H1 (cell line): ENCODE measurements at regions of chr9 and their contacts with region 1.

Region 1: GRCh38 chr9:97598461-97599288 is 34.5 kb downstream of the TSTD2 start:
- DNase-seq: peak; percentile 29 to 77
- H3K4me3 ChIP-seq: no peak overlapping the region
- H3K27ac ChIP-seq: no peak overlapping the region
- H3K4me1 ChIP-seq: peaks cover 0 to 5% (median 0%) of the 10 kb centered on the region in 4 experiments; a peak in 3 of 7 replicates
- H3K27me3 ChIP-seq: no peaks in the 10 kb centered on the region
- CTCF ChIP-seq: peak; percentile 70 to 92 (median 88)
- EP300 ChIP-seq: no peak
- POLR2A ChIP-seq: no peak
- RAD21 ChIP-seq: peak; percentile 84 to 87

Region 2: GRCh38 chr9:97459099-97459725 is 139.5 kb before region 1 on chr9:
- CTCF ChIA-PET with region 1: interaction called, 17 read pairs
- POLR2A ChIA-PET with region 1: no interaction called
- DNase-seq: no peak
- H3K4me3 ChIP-seq: no peak overlapping the region
- H3K27ac ChIP-seq: no peak overlapping the region
- H3K4me1 ChIP-seq: peaks cover 0 to 4% (median 3%) of the 10 kb centered on the region in 4 experiments; a peak in 4 of 7 replicates
- H3K27me3 ChIP-seq: peaks cover 0 to 1% (median 0%) of the 10 kb centered on the region in 4 experiments; a peak in 1 of 7 replicates
- CTCF ChIP-seq: no peak
- EP300 ChIP-seq: no peak
- POLR2A ChIP-seq: no peak
- RAD21 ChIP-seq: no peak

Region 3: GRCh38 chr9:97487107-97487506 is 111.6 kb before region 1 on chr9:
- CTCF ChIA-PET with region 1: interaction called, 29 read pairs
- POLR2A ChIA-PET with region 1: no interaction called
- DNase-seq: no peak
- H3K4me3 ChIP-seq: no peak overlapping the region
- H3K27ac ChIP-seq: no peak overlapping the region
- H3K4me1 ChIP-seq: no peaks in the 10 kb centered on the region
- H3K27me3 ChIP-seq: peaks cover 0 to 3% (median 0%) of the 10 kb centered on the region in 4 experiments; a peak in 2 of 7 replicates
- CTCF ChIP-seq: peak in 1 of 3 experiments; percentile 40; a peak in 2 of 4 replicates
- EP300 ChIP-seq: no peak
- POLR2A ChIP-seq: no peak
- RAD21 ChIP-seq: no peak

Region 4: DNA sequence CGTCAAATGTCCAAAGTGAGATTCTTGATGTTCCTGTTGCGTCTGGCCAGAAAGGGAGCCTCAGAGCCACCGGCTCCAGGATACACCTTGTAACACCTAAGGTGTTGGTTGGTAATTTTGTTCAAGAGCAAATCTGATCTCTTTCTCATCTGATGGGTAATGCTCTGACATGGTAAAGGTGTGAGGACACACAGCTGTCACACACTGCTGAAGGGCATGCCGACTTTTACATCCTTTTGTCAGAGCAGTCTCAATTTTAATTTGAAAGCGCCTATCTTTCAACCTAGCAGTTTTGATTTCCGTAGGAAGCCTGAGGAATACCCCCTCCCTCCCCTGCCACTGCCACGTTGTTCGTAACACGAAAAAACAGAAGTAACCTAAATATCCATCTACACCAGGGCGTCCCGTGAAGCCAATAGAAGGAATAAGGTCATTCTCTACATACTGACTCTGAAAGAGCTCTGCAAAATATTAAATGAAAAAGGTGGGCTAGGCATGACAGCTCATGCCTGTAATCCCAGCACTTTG is 22.9 kb before region 1 on chr9:
- CTCF ChIA-PET with region 1: interaction called, 14 read pairs
- POLR2A ChIA-PET with region 1: interaction called, 3 read pairs
- DNase-seq: peak in 1 of 2 experiments; percentile 11
- H3K4me3 ChIP-seq: no peak overlapping the region
- H3K27ac ChIP-seq: no peak overlapping the region
- H3K4me1 ChIP-seq: no peaks in the 10 kb centered on the region
- H3K27me3 ChIP-seq: no peaks in the 10 kb centered on the region
- CTCF ChIP-seq: no peak
- EP300 ChIP-seq: no peak
- POLR2A ChIP-seq: no peak
- RAD21 ChIP-seq: no peak

Region 5: GRCh38 chr9:97623946-97624345 is 25.3 kb after region 1 on chr9:
- CTCF ChIA-PET with region 1: interaction called, 10 read pairs
- POLR2A ChIA-PET with region 1: no interaction called
- DNase-seq: no peak
- H3K4me3 ChIP-seq: no peak overlapping the region
- H3K27ac ChIP-seq: no peak overlapping the region
- H3K4me1 ChIP-seq: peaks cover 0 to 6% (median under 1%) of the 10 kb centered on the region in 4 experiments; a peak in 1 of 7 replicates
- H3K27me3 ChIP-seq: no peaks in the 10 kb centered on the region
- CTCF ChIP-seq: no peak
- EP300 ChIP-seq: no peak
- POLR2A ChIP-seq: no peak
- RAD21 ChIP-seq: no peak

Region 6: DNA sequence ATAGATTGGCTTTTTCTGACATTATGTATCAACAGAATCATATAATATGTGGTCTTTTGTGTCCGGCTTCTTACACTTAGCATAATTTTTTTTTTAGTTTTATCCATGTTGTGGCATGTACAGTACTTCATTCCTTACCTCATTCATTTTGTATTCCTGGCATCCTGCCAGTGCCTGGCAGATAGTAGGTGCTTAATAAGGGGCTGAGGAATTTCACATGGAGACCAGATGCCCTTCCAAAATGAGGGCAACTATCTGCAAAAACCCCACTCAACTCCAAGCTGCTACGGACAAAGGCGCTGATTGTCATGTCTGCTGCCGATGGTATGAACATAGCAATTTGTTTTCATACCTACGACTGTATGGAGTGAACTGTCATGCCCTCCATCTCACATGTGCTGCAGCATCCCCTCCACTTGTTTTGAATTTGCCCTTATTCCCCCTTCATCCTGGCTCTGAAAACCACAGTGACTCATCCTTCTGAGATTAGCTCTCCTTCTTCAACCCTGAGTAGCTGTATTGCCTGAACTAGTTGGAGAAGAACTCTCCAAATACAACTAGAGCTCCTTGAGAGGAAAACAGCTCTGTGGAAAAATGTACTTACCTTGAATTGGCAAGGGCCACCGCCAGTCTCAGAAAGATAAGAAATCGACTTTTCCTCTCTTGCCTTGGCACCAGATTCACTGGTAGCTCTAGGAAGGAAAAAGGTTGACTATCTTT is 213.0 kb after region 1 on chr9:
- CTCF ChIA-PET with region 1: no interaction called
- POLR2A ChIA-PET with region 1: no interaction called
- DNase-seq: no peak
- H3K4me3 ChIP-seq: no peak overlapping the region
- H3K27ac ChIP-seq: no peak overlapping the region
- H3K4me1 ChIP-seq: peaks cover 3 to 15% (median 12%) of the 10 kb centered on the region in 4 experiments; a peak in 6 of 7 replicates
- H3K27me3 ChIP-seq: peaks cover 0 to 3% (median 0%) of the 10 kb centered on the region in 4 experiments; a peak in 1 of 7 replicates
- CTCF ChIP-seq: no peak
- EP300 ChIP-seq: no peak
- POLR2A ChIP-seq: no peak
- RAD21 ChIP-seq: no peak